Activated CD4-positive, alpha-beta T cell treated with anti-CD3 and anti-CD28 coated beads for 36 hours (primary cell): ENCODE measurements at regions of chr5 and their contacts with region 1.

Region 1: GRCh38 chr5:83076742-83077661 is at the starts of genes TMEM167A and XRCC4:
- DNase-seq: peak; percentile 95
- ATAC-seq: peak; percentile 100
- H3K4me3 Mint-ChIP-seq: peak within 1 kb of the TSS; percentile 98
- H3K27ac Mint-ChIP-seq: peak within 1 kb of the TSS; percentile 98
- H3K4me1 Mint-ChIP-seq: peaks cover 51% of the 10 kb centered on the region
- H3K27me3 Mint-ChIP-seq: no peaks in the 10 kb centered on the region
- total RNA-seq, gene TMEM167A: 32.7 to 70.9 TPM
- total RNA-seq, gene XRCC4: 13.7 to 16.9 TPM

Region 2: GRCh38 chr5:81288021-81288433 is 1789.0 kb before region 1 on chr5:
- CTCF ChIA-PET with region 1: no interaction called
- POLR2A ChIA-PET with region 1: no interaction called
- intact Hi-C with region 1: loop called in 1 of 2 experiments (anchors 10 kb)
- DNase-seq: no peak
- ATAC-seq: peak; percentile 14
- H3K4me3 Mint-ChIP-seq: no peak overlapping the region
- H3K27ac Mint-ChIP-seq: no peak overlapping the region
- H3K4me1 Mint-ChIP-seq: peaks cover 57% of the 10 kb centered on the region
- H3K27me3 Mint-ChIP-seq: no peaks in the 10 kb centered on the region

Region 3: GRCh38 chr5:82278095-82278918 is 798.7 kb before region 1 on chr5 and contains the start of gene RPS23:
- CTCF ChIA-PET with region 1: no interaction called
- POLR2A ChIA-PET with region 1: no interaction called
- intact Hi-C with region 1: loop called (anchors 1 to 2 kb)
- DNase-seq: peak; percentile 93
- ATAC-seq: peak; percentile 95
- H3K4me3 Mint-ChIP-seq: peak within 1 kb of the TSS; percentile 86
- H3K27ac Mint-ChIP-seq: peak within 1 kb of the TSS; percentile 99
- H3K4me1 Mint-ChIP-seq: peaks cover 46% of the 10 kb centered on the region
- H3K27me3 Mint-ChIP-seq: no peaks in the 10 kb centered on the region
- total RNA-seq, gene RPS23: 2,831 to 3,226 TPM

Region 4: GRCh38 chr5:83179966-83180365 is 103.0 kb after region 1 on chr5:
- CTCF ChIA-PET with region 1: no interaction called
- POLR2A ChIA-PET with region 1: no interaction called
- intact Hi-C with region 1: no loop called
- DNase-seq: no peak
- ATAC-seq: no peak
- H3K4me3 Mint-ChIP-seq: no peak overlapping the region
- H3K27ac Mint-ChIP-seq: no peak overlapping the region
- H3K4me1 Mint-ChIP-seq: no peaks in the 10 kb centered on the region
- H3K27me3 Mint-ChIP-seq: no peaks in the 10 kb centered on the region

Region 5: DNA sequence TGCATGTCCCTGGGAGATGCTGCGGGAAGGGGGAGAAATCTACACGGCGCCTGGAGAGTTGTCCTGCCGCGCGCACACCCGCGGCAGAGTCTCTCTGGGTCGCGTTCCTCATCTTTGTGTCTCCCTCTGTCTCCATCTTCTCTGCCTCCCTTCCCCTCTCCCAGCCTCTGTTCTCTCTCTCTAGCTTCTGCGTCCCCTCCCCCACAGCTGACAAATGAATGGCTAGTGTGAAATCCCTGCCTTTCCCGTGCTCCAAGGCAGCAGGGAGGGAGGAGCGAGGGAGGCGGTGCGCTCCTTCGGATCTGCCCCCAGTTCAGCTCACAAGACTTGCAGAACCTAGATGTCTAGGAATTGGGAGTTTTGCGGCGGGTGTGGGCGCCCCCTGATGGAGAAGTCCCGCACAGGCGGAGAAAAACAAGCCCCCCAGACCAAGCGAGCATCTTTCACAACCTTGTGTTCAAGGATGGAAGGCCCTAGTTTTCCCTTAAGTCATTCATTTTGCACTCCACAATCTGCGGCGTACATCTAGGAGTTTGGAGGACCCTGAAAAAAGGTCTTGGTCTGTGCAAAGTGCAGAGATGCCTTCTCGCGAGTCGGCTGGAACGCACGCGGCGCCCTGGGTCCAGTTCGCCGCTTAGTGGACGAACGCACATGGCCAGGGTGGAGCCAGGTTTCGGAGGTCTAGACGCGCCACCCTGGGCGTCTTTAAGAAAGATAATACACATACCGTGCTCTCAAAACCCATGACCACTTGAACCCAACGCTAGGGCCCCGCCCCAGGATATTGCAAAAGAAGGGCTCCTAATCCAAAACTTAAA is 396.6 kb after region 1 on chr5:
- CTCF ChIA-PET with region 1: no interaction called
- POLR2A ChIA-PET with region 1: no interaction called
- intact Hi-C with region 1: loop called (anchors 1 to 2 kb)
- DNase-seq: peak; percentile 79
- ATAC-seq: peak; percentile 69
- H3K4me3 Mint-ChIP-seq: peak overlapping the region; percentile 75
- H3K27ac Mint-ChIP-seq: no peak overlapping the region
- H3K4me1 Mint-ChIP-seq: peaks cover 38% of the 10 kb centered on the region
- H3K27me3 Mint-ChIP-seq: peaks cover 58% of the 10 kb centered on the region